CD4-positive, alpha-beta T cell (primary cell): ENCODE measurements at regions of chr14 and their contacts with region 1.

Region 1: DNA sequence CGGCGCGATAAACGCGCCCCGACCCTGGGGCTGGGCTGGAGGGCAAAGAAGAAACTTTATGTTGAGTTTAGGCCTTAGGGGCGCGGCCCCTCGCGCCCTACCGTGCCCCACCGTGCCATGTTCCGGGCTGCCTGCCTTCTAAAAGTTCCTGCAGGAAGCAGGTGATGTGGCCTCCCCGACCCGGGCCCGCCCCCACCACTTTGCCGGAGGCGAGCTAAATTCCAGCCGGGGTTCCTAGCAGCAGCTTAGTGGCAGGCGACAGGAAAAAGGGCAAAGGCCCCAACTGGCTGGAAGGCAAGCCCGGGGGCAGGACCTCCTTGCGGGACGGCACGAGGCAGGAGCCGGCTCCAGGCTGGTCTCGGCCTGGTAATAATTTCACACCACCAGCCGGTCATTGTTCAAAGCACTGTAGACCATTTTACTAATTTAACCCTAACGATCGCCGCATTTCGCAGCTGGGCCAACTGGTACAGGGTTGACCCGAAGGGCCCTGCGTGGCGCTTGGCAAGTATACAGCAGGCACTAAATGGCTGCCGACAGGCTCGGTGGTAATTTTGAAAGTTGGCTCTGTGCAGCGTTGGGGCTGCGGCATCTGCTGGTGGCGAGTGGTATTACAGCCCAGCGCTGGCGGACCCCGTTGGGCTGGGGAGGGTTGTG is 895 bp upstream of the CCDC88C start:
- DNase-seq: peak; percentile 67 to 91 (median 80)
- ATAC-seq: peak; percentile 28
- H3K4me3 ChIP-seq: peak overlapping the region; percentile 56
- H3K4me3 Mint-ChIP-seq: peak overlapping the region; percentile 86
- H3K27ac ChIP-seq: peak overlapping the region; percentile 52 to 78
- H3K27ac Mint-ChIP-seq: peak overlapping the region; percentile 86
- H3K4me1 ChIP-seq: peaks cover 35% of the 10 kb centered on the region
- H3K4me1 Mint-ChIP-seq: peaks cover 46% of the 10 kb centered on the region
- H3K27me3 ChIP-seq: no peaks in the 10 kb centered on the region
- H3K27me3 Mint-ChIP-seq: no peaks in the 10 kb centered on the region
- CTCF ChIP-seq: peak; percentile 97

Region 2: GRCh38 chr14:91244501-91244901 is 174.0 kb before region 1 on chr14 and contains the start of gene GPR68:
- CTCF ChIA-PET with region 1: no interaction called
- POLR2A ChIA-PET with region 1: interaction called, 10 read pairs
- intact Hi-C with region 1: loop called (anchors 5 kb)
- DNase-seq: peak in 6 of 14 experiments; percentile 26 to 70 (median 58)
- ATAC-seq: no peak
- H3K4me3 ChIP-seq: peak within 1 kb of the TSS; percentile 65
- H3K4me3 Mint-ChIP-seq: peak within 1 kb of the TSS; percentile 90
- H3K27ac ChIP-seq: peak within 1 kb of the TSS; percentile 97
- H3K27ac Mint-ChIP-seq: peak within 1 kb of the TSS; percentile 85
- H3K4me1 ChIP-seq: peaks cover 91% of the 10 kb centered on the region
- H3K4me1 Mint-ChIP-seq: peaks cover 95% of the 10 kb centered on the region
- H3K27me3 ChIP-seq: no peaks in the 10 kb centered on the region
- H3K27me3 Mint-ChIP-seq: no peaks in the 10 kb centered on the region
- CTCF ChIP-seq: no peak
- total RNA-seq, gene GPR68: 2.8 to 2.9 TPM

Region 3: DNA sequence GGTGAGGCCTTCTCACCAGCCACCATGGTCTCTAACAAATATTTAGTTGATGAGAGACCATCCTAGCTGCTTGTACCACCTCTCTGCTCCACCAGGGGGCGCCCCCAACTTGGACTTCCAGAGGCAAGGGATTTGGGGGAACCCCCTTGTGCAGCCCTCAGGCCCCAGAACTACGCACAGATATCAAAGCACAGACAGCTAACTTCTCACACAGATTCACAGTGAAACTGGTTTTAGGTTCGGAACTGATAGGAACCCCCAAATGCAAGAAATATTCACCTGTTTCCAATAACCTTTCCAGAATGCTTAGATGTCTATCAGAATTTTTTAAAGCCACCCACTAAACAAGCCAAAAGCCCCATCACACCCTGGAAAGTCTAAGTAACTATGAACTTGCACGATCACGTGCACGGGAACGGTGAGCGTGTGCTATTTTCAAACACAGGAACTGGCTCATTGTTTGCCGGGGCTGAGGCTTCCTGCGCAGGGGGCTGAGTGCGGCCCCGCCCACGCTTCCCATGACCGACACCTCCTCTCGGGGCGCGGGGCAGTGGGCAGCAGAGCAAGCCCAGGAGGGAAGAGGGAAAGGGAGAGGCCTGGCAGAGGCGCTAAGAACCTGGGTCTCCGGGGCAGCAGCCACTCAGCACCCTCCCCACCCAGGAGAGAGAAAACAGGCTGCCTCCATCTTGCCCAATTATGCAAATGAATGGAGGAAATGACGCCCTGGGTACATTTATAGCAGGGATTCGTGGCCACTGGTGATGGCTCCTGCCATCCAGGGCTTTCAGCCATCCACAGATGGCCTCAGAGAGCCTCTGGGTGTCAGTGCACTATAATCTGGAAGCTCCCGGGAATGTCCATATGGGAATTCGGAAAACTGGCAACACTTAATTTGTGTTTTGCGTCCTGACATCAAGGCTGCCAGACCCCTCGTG is 94.6 kb before region 1 on chr14:
- CTCF ChIA-PET with region 1: interaction called, 53 read pairs
- POLR2A ChIA-PET with region 1: interaction called, 49 read pairs
- intact Hi-C with region 1: loop called (anchors 1 kb)
- DNase-seq: peak; percentile 87 to 97 (median 92)
- ATAC-seq: peak; percentile 80
- H3K4me3 ChIP-seq: peak overlapping the region; percentile 47
- H3K4me3 Mint-ChIP-seq: peak overlapping the region; percentile 81
- H3K27ac ChIP-seq: peak overlapping the region; percentile 93 to 95
- H3K27ac Mint-ChIP-seq: peak overlapping the region; percentile 97
- H3K4me1 ChIP-seq: peaks cover 97% of the 10 kb centered on the region
- H3K4me1 Mint-ChIP-seq: peaks cover 80% of the 10 kb centered on the region
- H3K27me3 ChIP-seq: no peaks in the 10 kb centered on the region
- H3K27me3 Mint-ChIP-seq: no peaks in the 10 kb centered on the region
- CTCF ChIP-seq: peak; percentile 95

Region 4: GRCh38 chr14:91367173-91368171 is 51.0 kb before region 1 on chr14:
- CTCF ChIA-PET with region 1: interaction called, 7 read pairs
- POLR2A ChIA-PET with region 1: interaction called, 103 read pairs
- intact Hi-C with region 1: no loop called
- DNase-seq: peak in 13 of 14 experiments; percentile 37 to 98 (median 64)
- ATAC-seq: peak; percentile 85
- H3K4me3 ChIP-seq: peak overlapping the region; percentile 32
- H3K4me3 Mint-ChIP-seq: peak overlapping the region; percentile 86
- H3K27ac ChIP-seq: peak overlapping the region; percentile 76 to 80
- H3K27ac Mint-ChIP-seq: peak overlapping the region; percentile 96
- H3K4me1 ChIP-seq: peaks cover 99% of the 10 kb centered on the region
- H3K4me1 Mint-ChIP-seq: peaks cover 86% of the 10 kb centered on the region
- H3K27me3 ChIP-seq: no peaks in the 10 kb centered on the region
- H3K27me3 Mint-ChIP-seq: no peaks in the 10 kb centered on the region
- CTCF ChIP-seq: no peak

Region 5: GRCh38 chr14:91402771-91403600 is 15.5 kb before region 1 on chr14:
- CTCF ChIA-PET with region 1: interaction called, 62 read pairs
- POLR2A ChIA-PET with region 1: interaction called, 294 read pairs
- intact Hi-C with region 1: loop called (anchors 1 to 2 kb)
- DNase-seq: peak in 1 of 14 experiments; percentile 27
- ATAC-seq: no peak
- H3K4me3 ChIP-seq: peak overlapping the region; percentile 17
- H3K4me3 Mint-ChIP-seq: peak overlapping the region; percentile 81
- H3K27ac ChIP-seq: peak overlapping the region; percentile 70 to 85
- H3K27ac Mint-ChIP-seq: peak overlapping the region; percentile 98
- H3K4me1 ChIP-seq: peaks cover 98% of the 10 kb centered on the region
- H3K4me1 Mint-ChIP-seq: peaks cover 90% of the 10 kb centered on the region
- H3K27me3 ChIP-seq: no peaks in the 10 kb centered on the region
- H3K27me3 Mint-ChIP-seq: no peaks in the 10 kb centered on the region
- CTCF ChIP-seq: no peak

Region 6: GRCh38 chr14:91883753-91884152 is 465.2 kb after region 1 on chr14:
- CTCF ChIA-PET with region 1: no interaction called
- POLR2A ChIA-PET with region 1: no interaction called
- intact Hi-C with region 1: no loop called
- DNase-seq: no peak
- ATAC-seq: no peak
- H3K4me3 ChIP-seq: no peak overlapping the region
- H3K4me3 Mint-ChIP-seq: no peak overlapping the region
- H3K27ac ChIP-seq: no peak overlapping the region
- H3K27ac Mint-ChIP-seq: peak overlapping the region; percentile 2
- H3K4me1 ChIP-seq: peaks cover 23% of the 10 kb centered on the region
- H3K4me1 Mint-ChIP-seq: peaks cover 43% of the 10 kb centered on the region
- H3K27me3 ChIP-seq: no peaks in the 10 kb centered on the region
- H3K27me3 Mint-ChIP-seq: no peaks in the 10 kb centered on the region
- CTCF ChIP-seq: no peak